Esophagus squamous epithelium (tissue), 5 donors: ENCODE measurements at regions of chr14 and their contacts with region 1.

Region 1: DNA sequence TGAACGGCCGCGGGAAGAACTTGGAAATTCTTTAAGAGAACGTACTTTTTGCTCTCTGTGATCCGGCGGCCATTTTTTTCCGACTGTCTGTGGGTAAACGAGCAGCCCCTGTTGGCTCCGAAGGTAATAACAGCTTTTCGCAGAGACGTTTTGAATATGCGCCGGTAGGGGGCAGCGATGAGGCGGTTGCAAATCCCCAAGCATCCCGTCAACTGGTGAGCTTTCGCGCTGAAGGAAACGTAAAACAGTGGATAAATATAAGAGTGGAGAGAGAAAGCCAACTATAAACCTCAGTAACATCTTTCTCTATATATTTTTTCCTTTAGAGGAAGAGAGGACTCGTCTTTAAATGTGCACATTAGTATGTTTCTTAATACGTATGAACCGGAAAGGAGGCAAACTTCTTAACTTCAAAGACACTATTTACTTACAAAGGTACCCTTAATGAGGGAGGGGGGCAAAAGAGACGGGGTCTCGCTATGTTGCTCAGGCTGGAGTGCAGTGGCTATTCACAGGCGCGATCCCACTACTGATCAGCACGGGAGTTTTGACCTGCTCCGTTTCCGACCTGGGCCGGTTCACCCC is 9.6 kb upstream of the NEMF start:
- DNase-seq: peak; percentile 56
- H3K4me3 ChIP-seq: peak overlapping the region; percentile 38 to 68 (median 60)
- H3K27ac ChIP-seq: peak overlapping the region; percentile 90 to 99 (median 96)
- H3K4me1 ChIP-seq: peaks cover 0 to 56% (median 18%) of the 10 kb centered on the region in 3 donors
- H3K27me3 ChIP-seq: no peaks in the 10 kb centered on the region
- CTCF ChIP-seq: peak; percentile 96 to 100 (median 100)
- POLR2A ChIP-seq: peak in 1 of 4 donors; percentile 47

Region 2: GRCh38 chr14:49732896-49733295 is 129.3 kb before region 1 on chr14:
- intact Hi-C with region 1: no loop called
- DNase-seq: no peak
- H3K4me3 ChIP-seq: no peak overlapping the region
- H3K27ac ChIP-seq: no peak overlapping the region
- H3K4me1 ChIP-seq: no peaks in the 10 kb centered on the region
- H3K27me3 ChIP-seq: no peaks in the 10 kb centered on the region
- CTCF ChIP-seq: no peak
- POLR2A ChIP-seq: no peak

Region 3: GRCh38 chr14:49920935-49921334 is 58.8 kb after region 1 on chr14:
- intact Hi-C with region 1: no loop called
- DNase-seq: no peak
- H3K4me3 ChIP-seq: no peak overlapping the region
- H3K27ac ChIP-seq: no peak overlapping the region
- H3K4me1 ChIP-seq: no peaks in the 10 kb centered on the region
- H3K27me3 ChIP-seq: no peaks in the 10 kb centered on the region
- CTCF ChIP-seq: no peak
- POLR2A ChIP-seq: no peak

Region 4: GRCh38 chr14:50008562-50009350 is 146.6 kb after region 1 on chr14:
- intact Hi-C with region 1: no loop called
- DNase-seq: no peak
- H3K4me3 ChIP-seq: no peak overlapping the region
- H3K27ac ChIP-seq: peak overlapping the region; percentile 41 to 95 (median 86)
- H3K4me1 ChIP-seq: peaks cover 13 to 60% (median 16%) of the 10 kb centered on the region in 3 donors
- H3K27me3 ChIP-seq: no peaks in the 10 kb centered on the region
- CTCF ChIP-seq: no peak
- POLR2A ChIP-seq: no peak

Region 5: GRCh38 chr14:50099335-50099734 is 237.2 kb after region 1 on chr14:
- intact Hi-C with region 1: loop called (anchors 5 kb)
- DNase-seq: no peak
- H3K4me3 ChIP-seq: no peak overlapping the region
- H3K27ac ChIP-seq: no peak overlapping the region
- H3K4me1 ChIP-seq: peaks cover 0 to 20% (median 0%) of the 10 kb centered on the region in 3 donors
- H3K27me3 ChIP-seq: no peaks in the 10 kb centered on the region
- CTCF ChIP-seq: no peak
- POLR2A ChIP-seq: no peak